HepG2 (cell line): ENCODE measurements at regions of chr2 and their contacts with region 1.

Region 1: GRCh38 chr2:205934443-205934842 is 151.5 kb downstream of the INO80D start:
- DNase-seq: peak; percentile 34
- ATAC-seq: peak; percentile 75
- H3K4me3 ChIP-seq: no peak overlapping the region
- H3K27ac ChIP-seq: no peak overlapping the region
- H3K4me1 ChIP-seq: peaks cover 34% of the 10 kb centered on the region
- H3K27me3 ChIP-seq: peaks cover 0 to 2% of the 10 kb centered on the region in 2 experiments; a peak in 1 of 5 replicates
- CTCF ChIP-seq: peak; percentile 62
- EP300 ChIP-seq: no peak
- POLR2A ChIP-seq: no peak
- RAD21 ChIP-seq: peak; percentile 37; the same call in 1 of the 2 replicates

Region 2: DNA sequence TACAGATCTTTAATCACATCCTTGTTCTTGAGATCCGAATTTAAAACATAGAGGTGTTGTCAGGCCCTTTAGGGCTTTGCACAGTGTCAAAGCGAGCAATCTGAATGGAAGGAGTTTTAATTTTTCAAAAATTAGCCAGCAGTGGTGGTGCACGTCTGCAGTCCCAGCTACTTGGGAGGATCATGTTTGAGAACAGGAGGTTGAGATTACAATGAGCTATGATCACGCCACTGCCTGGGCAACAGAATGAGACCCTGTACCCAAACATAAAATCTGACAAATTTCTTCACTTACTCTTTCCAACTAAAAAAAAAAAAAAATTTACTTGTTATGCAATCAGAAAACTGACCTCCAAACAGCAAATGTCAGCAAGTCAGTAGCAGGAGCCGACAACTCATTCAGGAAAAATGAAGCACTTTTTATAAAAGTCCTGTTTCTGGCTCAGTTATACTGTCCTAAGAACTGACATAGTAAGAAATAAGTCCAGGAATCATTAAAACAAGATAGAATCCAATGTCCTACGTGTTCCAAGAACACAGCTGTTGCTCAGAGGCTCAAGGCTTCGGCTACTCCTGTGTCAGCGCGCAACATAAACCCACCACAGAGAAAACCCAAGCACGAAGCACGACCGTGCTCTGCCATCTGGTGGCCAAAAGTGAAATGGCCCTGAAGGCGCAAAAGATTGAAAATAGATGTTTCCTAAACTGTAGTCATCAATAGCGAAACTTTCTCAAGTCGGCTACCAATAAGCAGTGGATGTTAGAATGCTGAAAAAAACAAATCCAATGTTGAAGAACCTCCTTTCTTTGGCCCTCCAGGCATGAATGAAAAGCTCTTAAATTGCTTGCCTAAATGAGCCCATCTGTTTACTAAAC is 13.4 kb after region 1 on chr2:
- CTCF ChIA-PET with region 1: interaction called, 19 read pairs
- POLR2A ChIA-PET with region 1: interaction called, 3 read pairs
- in situ Hi-C with region 1: no loop called
- intact Hi-C with region 1: loop called (anchors 1 kb)
- DNase-seq: peak; percentile 68
- ATAC-seq: peak; percentile 71
- H3K4me3 ChIP-seq: peak overlapping the region; percentile 14 to 43 (median 29); a peak in 4 of 6 replicates
- H3K27ac ChIP-seq: no peak overlapping the region
- H3K4me1 ChIP-seq: peaks cover 77% of the 10 kb centered on the region
- H3K27me3 ChIP-seq: 0 out of 5 replicates have a peak, but pooled peaks cover 0 to 2% of the 10 kb centered on the region in 2 experiments
- CTCF ChIP-seq: peak; percentile 97
- EP300 ChIP-seq: peak in 1 of 2 experiments; percentile 27; a peak in 1 of 4 replicates
- POLR2A ChIP-seq: no peak
- RAD21 ChIP-seq: peak; percentile 92

Region 3: DNA sequence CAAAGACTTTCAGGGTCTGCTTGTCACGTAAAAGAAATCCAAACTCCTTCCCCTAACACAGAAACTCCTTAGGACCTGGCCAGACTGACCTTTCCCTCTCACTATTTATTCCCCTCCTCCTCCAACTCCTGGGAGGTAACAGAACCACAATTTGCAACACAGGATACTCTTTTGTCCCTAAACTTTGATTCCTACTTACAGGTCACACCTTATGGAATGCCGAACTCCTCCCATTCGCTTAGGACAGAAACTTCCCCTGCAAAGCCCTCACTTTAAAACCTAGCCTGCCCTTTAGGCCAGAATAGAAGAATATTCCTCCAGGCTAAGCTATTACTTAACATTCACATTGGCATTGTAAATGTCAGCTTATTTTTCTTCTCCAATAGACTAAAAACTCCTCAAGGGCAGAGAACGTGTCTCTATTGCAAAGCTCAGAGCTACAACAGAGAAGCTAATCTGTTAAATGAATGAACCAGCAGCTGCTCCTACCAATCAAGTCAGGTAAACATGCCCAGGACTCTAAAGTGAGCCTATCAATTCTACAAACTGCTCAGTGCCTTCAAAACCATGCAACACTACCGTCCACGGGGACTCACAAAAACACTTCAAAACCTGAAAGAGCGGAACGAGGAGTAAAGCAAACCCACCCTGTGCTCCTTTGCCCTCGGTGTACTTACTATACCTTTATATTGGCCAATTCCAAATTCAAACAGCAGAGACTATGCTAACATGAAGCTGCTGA is 145.5 kb after region 1 on chr2:
- CTCF ChIA-PET with region 1: no interaction called
- POLR2A ChIA-PET with region 1: no interaction called
- in situ Hi-C with region 1: no loop called
- intact Hi-C with region 1: loop called (anchors 2 kb)
- DNase-seq: peak; percentile 48
- ATAC-seq: peak; percentile 27
- H3K4me3 ChIP-seq: no peak overlapping the region; a peak in 2 of 6 replicates
- H3K27ac ChIP-seq: peak overlapping the region; percentile 44
- H3K4me1 ChIP-seq: peaks cover 77% of the 10 kb centered on the region
- H3K27me3 ChIP-seq: no peaks in the 10 kb centered on the region; a peak in 1 of 5 replicates
- CTCF ChIP-seq: no peak
- EP300 ChIP-seq: no peak
- POLR2A ChIP-seq: no peak
- RAD21 ChIP-seq: no peak

Region 4: GRCh38 chr2:206154197-206154596 is 219.8 kb after region 1 on chr2:
- CTCF ChIA-PET with region 1: no interaction called
- POLR2A ChIA-PET with region 1: no interaction called
- in situ Hi-C with region 1: no loop called
- intact Hi-C with region 1: loop called (anchors 5 kb)
- DNase-seq: peak; percentile 58
- ATAC-seq: peak; percentile 83
- H3K4me3 ChIP-seq: no peak overlapping the region
- H3K27ac ChIP-seq: no peak overlapping the region
- H3K4me1 ChIP-seq: peaks cover 29% of the 10 kb centered on the region
- H3K27me3 ChIP-seq: no peaks in the 10 kb centered on the region; a peak in 1 of 5 replicates
- CTCF ChIP-seq: peak; percentile 77
- EP300 ChIP-seq: no peak
- POLR2A ChIP-seq: no peak
- RAD21 ChIP-seq: no peak